ENCODE measurements at regions of chr19 and their contacts with region 1.

Region 1: DNA sequence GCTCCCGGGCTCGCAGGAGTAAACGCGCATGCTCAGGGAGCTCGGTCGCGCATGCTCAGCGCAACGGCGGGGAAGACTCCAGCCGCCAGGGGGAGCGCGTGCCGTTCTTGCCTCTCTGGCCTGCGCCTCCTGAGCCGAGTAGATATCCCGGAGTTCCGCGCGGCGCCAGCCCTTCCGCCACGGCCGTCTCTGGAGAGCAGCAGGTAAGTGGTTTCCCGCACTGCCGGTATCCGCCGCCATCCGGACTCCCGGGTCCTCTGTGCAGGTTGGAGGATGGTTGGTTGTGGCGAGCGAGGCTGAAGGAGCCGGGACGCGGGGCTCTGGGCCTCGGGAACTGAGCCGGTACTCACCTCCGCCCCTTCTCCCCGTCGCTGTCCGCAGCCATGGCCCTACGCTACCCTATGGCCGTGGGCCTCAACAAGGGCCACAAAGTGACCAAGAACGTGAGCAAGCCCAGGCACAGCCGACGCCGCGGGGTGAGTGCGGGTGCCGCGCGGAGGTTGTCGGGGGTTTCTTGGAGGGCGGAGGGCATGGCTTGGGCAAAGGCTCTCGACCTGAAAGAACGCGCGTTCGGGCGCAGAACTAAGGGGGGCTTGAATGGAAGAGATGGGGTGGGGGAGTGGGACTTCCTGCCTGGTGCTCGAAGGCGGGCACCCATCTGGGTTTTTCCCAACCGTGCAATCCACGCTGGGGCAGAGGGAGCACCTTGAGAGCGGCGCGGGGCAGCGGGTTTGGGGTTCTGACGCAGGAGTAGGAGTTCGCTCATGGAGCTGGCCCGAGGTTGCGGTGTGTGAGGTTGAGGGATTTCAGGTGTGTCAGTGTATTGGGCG is at the start of gene RPL36:
- DNase-seq: peak; percentile 99
- ATAC-seq: peak; percentile 81
- total RNA-seq, gene RPL36: 435 TPM

Region 2: DNA sequence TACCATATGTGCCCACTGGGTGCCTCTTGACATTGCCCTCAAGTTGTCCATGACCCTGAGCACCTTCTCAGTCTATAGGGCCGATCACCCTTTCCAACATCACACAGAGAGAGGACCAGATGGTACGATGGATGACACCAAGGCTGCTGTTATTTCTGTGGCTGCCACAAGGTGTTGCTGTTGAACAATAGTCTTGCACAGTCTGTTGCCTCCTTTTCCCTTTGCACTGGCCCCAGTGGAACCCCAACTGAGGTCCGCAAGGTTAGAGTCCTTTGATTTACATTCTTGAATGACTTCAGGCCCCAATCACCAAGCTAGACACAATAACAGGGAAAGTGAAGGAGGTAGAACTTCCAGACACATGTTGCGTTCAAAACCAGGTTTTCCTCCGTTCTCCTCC is 174.6 kb before region 1 on chr19:
- intact Hi-C with region 1: no loop called
- DNase-seq: no peak
- ATAC-seq: no peak

Region 3: DNA sequence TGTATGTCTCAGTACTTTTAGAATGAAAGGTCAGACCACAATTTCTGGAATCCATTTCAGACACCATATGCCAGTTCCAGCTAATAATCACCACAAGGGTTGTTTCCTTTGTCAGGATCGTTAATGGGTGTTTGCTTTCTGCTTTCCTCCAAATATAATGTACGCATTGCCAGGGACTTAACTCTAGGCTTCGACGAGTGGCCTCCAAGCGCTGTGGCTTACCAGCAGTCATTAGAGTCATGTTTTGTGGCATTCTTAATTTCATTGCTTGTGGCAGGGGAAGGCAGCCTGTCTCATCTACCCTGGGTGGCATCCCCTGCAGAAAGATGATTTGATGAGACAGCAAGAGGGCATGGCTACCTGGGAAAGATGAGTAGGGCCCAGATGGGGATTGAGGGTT is 44.9 kb before region 1 on chr19:
- intact Hi-C with region 1: no loop called
- DNase-seq: no peak
- ATAC-seq: no peak

Region 4: DNA sequence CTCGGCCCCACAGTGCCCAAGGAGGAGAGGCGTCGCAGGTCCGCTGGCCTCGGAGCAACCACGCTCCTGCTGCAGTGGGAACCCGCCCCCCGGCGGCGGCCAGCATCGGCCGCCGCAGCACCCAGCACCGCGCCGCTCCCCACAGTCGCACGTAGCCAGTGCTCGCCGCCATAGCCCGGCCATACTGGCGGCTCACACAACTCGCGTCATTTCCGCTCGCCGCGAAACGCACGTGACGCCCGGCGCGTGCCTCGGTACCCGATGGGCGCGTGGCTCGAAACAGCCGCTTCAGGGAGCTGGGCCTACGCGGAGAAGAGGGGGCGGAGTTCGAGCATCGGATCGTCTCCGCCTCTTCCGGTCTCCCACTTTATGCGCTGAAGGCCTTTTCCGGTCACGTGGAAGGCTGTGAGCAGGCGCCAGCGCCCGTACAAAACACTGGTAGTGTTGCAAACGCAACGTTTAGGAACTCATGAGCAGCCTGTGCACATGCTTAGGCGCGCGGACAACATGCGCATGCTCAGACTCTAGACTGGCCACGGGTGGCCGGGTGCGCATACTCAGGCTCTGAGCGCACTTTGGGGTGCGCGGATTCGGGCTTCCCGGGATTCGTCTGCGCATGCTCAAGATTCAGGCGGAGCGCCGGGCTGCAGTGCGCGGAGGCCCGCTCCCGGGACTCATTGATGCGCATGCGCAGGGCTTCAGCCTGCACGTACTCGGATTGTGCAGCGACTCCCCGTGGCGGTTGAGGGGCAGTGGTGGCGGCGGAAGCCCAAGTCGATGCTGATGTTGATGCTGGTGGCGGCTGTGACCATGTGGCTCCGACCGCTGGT is 29.8 kb after region 1 on chr19 and contains the starts of genes CATSPERD and LONP1:
- intact Hi-C with region 1: loop called (anchors 2 kb)
- DNase-seq: peak; percentile 99
- ATAC-seq: peak; percentile 99
- total RNA-seq, gene CATSPERD: not detected
- total RNA-seq, gene LONP1: 98.1 TPM

Region 5: DNA sequence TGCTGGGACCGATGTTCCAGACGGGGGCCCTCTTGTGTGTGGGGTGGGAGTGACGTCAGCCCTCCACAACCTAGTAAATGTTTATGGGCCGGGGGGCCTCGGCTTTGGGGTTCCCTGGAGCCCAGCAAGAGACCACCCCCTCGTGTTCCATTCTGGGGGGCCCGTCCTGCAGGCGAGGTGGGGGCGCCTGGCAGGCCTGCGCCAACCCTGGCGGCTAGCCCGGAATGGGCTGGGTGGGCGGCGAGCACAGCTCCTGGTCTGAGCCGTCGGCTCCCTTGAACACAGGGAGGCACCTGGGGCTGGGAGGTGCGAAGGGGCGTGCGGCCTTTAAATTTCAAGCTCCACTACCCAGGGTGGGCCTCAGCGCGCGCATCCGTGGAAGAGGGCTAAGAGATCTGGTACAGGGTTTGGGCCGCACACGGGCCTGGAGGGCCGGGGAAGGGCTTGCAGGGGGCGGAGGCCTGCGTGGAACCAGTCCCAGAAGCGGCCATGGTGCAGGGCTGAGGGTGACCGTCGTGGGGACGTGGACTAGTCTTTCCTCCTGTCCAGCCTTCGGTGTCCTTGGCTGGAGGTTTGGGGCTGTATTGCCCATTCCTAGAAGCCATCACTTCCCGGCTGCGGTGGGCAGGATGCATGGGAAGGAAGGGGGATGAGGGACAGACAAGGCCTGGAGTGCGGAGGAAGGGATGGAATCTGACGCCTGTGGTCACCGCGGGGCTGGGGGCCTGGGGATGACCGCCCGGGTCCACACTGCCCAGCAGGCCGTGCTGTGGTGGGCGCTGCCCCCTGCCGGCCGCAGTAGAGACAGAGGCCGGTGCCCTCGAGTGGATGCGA is 201.8 kb after region 1 on chr19:
- intact Hi-C with region 1: no loop called
- DNase-seq: no peak
- ATAC-seq: peak; percentile 61

Measured in Right ventricle myocardium inferior (tissue), 1 donor.